Breast epithelium (tissue), 4 donors: ENCODE measurements at regions of chr2 and their contacts with region 1.

Region 1: GRCh38 chr2:219029829-219030165 is 11.5 kb downstream of the CFAP65 start:
- DNase-seq: peak; percentile 69 to 82
- H3K4me3 ChIP-seq: no peak overlapping the region
- H3K27ac ChIP-seq: no peak overlapping the region
- H3K4me1 ChIP-seq: no peaks in the 10 kb centered on the region
- H3K27me3 ChIP-seq: peaks cover 0 to 30% of the 10 kb centered on the region in 2 donors
- CTCF ChIP-seq: peak; percentile 79 to 92 (median 90)
- POLR2A ChIP-seq: no peak

Region 2: GRCh38 chr2:219142329-219142728 is 112.5 kb after region 1 on chr2:
- intact Hi-C with region 1: loop called (anchors 10 kb)
- DNase-seq: peak in 1 of 2 donors; percentile 58
- H3K4me3 ChIP-seq: no peak overlapping the region
- H3K27ac ChIP-seq: no peak overlapping the region
- H3K4me1 ChIP-seq: no peaks in the 10 kb centered on the region
- H3K27me3 ChIP-seq: no peaks in the 10 kb centered on the region
- CTCF ChIP-seq: no peak
- POLR2A ChIP-seq: no peak